ENCODE measurements at regions of chr16 and their contacts with region 1.

Region 1: DNA sequence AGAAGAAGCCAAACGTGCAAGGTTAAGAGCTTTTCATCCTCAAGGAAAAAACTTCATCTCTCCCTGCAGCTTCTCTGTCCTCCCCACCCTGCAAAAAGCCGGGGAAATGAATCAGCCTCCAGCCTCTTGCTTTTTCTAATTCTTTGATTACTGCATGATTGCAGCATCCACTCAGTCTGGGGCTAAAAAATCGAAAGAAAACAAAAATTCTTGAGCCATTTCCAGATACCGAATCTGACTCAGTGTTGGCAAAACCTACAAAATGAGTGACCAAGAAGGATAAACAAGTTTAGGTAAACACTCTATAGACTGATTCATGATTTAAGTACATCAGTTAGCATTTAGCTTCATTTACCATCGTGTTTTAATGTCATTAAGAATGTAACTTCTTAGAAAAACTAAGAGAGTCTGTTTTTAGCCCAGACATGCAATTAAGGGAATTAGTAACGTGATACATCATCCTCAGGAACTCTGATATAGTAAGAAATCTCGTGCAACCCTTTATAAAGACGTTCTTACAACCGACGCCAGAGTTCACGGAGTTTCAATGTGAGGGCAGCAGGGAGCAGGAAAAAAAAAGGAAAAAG is 287.3 kb upstream of the FOXF1 start:
- DNase-seq: peak; percentile 98
- ATAC-seq: peak; percentile 64
- H3K4me3 ChIP-seq: peak overlapping the region; percentile 52
- H3K27ac ChIP-seq: peak overlapping the region; percentile 99
- H3K4me1 ChIP-seq: peaks cover 33% of the 10 kb centered on the region
- H3K27me3 ChIP-seq: no peaks in the 10 kb centered on the region
- CTCF ChIP-seq: no peak
- POLR2A ChIP-seq: peak; percentile 84; the same call in 1 of the 2 replicates
- RAD21 ChIP-seq: peak; percentile 2; the same call in 1 of the 2 replicates

Region 2: GRCh38 chr16:85821441-85822135 is 401.5 kb before region 1 on chr16:
- CTCF ChIA-PET with region 1: no interaction called
- POLR2A ChIA-PET with region 1: no interaction called
- dilution Hi-C with region 1: no loop called
- in situ Hi-C with region 1: no loop called
- intact Hi-C with region 1: loop called (anchors 5 kb)
- DNase-seq: peak; percentile 76
- ATAC-seq: peak; percentile 91
- H3K4me3 ChIP-seq: no peak overlapping the region
- H3K27ac ChIP-seq: no peak overlapping the region
- H3K4me1 ChIP-seq: peaks cover 3% of the 10 kb centered on the region; the same call in 1 of the 2 replicates
- H3K27me3 ChIP-seq: peaks cover 28% of the 10 kb centered on the region
- CTCF ChIP-seq: peak; percentile 98
- POLR2A ChIP-seq: 0 out of 2 replicates have a peak, but pooled peaks have one; percentile 57
- RAD21 ChIP-seq: peak; percentile 99

Region 3: GRCh38 chr16:86158688-86159360 is 64.2 kb before region 1 on chr16:
- CTCF ChIA-PET with region 1: interaction called, 3 read pairs
- POLR2A ChIA-PET with region 1: interaction called, 16 read pairs
- dilution Hi-C with region 1: no loop called
- in situ Hi-C with region 1: no loop called
- intact Hi-C with region 1: no loop called
- DNase-seq: peak; percentile 36
- ATAC-seq: no peak
- H3K4me3 ChIP-seq: no peak overlapping the region
- H3K27ac ChIP-seq: no peak overlapping the region
- H3K4me1 ChIP-seq: peaks cover 13% of the 10 kb centered on the region
- H3K27me3 ChIP-seq: no peaks in the 10 kb centered on the region
- CTCF ChIP-seq: peak; percentile 41
- POLR2A ChIP-seq: no peak
- RAD21 ChIP-seq: peak; percentile 36

Region 4: GRCh38 chr16:86240716-86241363 is 17.8 kb after region 1 on chr16:
- CTCF ChIA-PET with region 1: no interaction called
- POLR2A ChIA-PET with region 1: interaction called, 10 read pairs
- dilution Hi-C with region 1: no loop called
- in situ Hi-C with region 1: no loop called
- intact Hi-C with region 1: no loop called
- DNase-seq: no peak
- ATAC-seq: peak; percentile 70
- H3K4me3 ChIP-seq: peak overlapping the region; percentile 4; the same call in 1 of the 2 replicates
- H3K27ac ChIP-seq: peak overlapping the region; percentile 88
- H3K4me1 ChIP-seq: peaks cover 10% of the 10 kb centered on the region
- H3K27me3 ChIP-seq: no peaks in the 10 kb centered on the region
- CTCF ChIP-seq: no peak
- POLR2A ChIP-seq: no peak
- RAD21 ChIP-seq: no peak

Region 5: GRCh38 chr16:86343027-86343787 is 120.1 kb after region 1 on chr16:
- CTCF ChIA-PET with region 1: no interaction called
- POLR2A ChIA-PET with region 1: no interaction called
- dilution Hi-C with region 1: no loop called
- in situ Hi-C with region 1: no loop called
- intact Hi-C with region 1: loop called (anchors 1 kb)
- DNase-seq: peak; percentile 89
- ATAC-seq: peak; percentile 92
- H3K4me3 ChIP-seq: no peak overlapping the region
- H3K27ac ChIP-seq: peak overlapping the region; percentile 96
- H3K4me1 ChIP-seq: peaks cover 21% of the 10 kb centered on the region
- H3K27me3 ChIP-seq: no peaks in the 10 kb centered on the region
- CTCF ChIP-seq: no peak
- POLR2A ChIP-seq: peak; percentile 39; the same call in 1 of the 2 replicates
- RAD21 ChIP-seq: no peak

Region 6: GRCh38 chr16:86396897-86397296 is 173.8 kb after region 1 on chr16:
- CTCF ChIA-PET with region 1: no interaction called
- POLR2A ChIA-PET with region 1: no interaction called
- dilution Hi-C with region 1: no loop called
- in situ Hi-C with region 1: loop called (anchors 10 kb)
- intact Hi-C with region 1: loop called (anchors 2 kb)
- DNase-seq: peak; percentile 95
- ATAC-seq: peak; percentile 82
- H3K4me3 ChIP-seq: peak overlapping the region; percentile 10; the same call in 1 of the 2 replicates
- H3K27ac ChIP-seq: peak overlapping the region; percentile 93
- H3K4me1 ChIP-seq: peaks cover 28% of the 10 kb centered on the region
- H3K27me3 ChIP-seq: no peaks in the 10 kb centered on the region
- CTCF ChIP-seq: no peak
- POLR2A ChIP-seq: peak; percentile 61; the same call in 1 of the 2 replicates
- RAD21 ChIP-seq: peak; percentile 4